Activated CD4-positive, alpha-beta memory T cell treated with anti-CD3 and anti-CD28 coated beads for 36 hours (primary cell): ENCODE measurements at regions of chr9 and their contacts with region 1.

Region 1: GRCh38 chr9:114894801-114895433 is 35.5 kb downstream of the TNFSF8 start:
- DNase-seq: peak; percentile 76
- H3K4me3 Mint-ChIP-seq: no peak overlapping the region
- H3K27ac Mint-ChIP-seq: peak overlapping the region; percentile 77
- H3K4me1 Mint-ChIP-seq: peaks cover 52% of the 10 kb centered on the region
- H3K27me3 Mint-ChIP-seq: no peaks in the 10 kb centered on the region

Region 2: DNA sequence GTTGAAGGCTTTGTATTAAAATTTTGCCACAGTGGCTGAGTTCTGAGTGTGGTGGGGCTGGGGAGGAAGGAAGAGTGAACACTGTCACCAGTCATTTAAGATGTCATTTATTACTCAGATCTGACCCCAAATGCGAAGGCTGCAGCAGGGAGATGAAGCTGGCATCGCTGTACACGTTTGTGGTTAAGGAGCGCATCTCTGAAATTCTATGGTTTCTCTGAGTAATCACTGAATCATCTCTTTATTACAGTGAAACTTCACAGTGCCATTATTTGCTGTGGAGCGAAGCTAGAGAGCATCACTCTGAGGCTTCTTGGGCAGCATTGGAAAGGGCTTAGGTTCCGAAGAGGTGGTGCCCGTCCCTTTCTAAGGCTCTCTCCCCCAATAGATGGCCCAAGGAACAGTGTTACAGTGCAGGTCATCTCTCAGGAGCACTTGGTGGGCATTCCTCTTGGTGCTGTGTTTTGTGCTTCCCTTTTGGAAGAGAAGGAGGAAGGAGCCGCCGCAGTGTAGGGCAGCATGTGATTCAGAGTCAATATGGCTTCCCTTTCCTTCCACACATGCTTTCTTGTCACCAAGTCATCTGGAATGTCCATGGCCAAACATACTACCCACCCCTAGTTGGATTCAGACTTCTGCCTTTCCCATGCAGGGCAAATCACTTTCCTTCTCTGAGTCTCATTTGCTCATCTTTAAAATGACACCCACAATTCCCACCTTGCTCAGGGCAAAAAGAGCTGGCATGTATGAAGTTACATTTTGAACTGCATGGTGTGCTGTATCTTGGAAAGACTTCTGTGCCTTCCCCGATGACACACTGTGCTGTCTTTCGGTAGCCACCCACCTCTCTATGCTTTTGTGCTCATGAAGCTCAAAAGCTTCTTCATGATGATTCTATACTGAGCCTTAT is 203.6 kb before region 1 on chr9:
- CTCF ChIA-PET with region 1: interaction called, 4 read pairs
- POLR2A ChIA-PET with region 1: interaction called, 11 read pairs
- intact Hi-C with region 1: loop called (anchors 2 kb)
- DNase-seq: peak; percentile 88
- H3K4me3 Mint-ChIP-seq: peak overlapping the region; percentile 55
- H3K27ac Mint-ChIP-seq: peak overlapping the region; percentile 99
- H3K4me1 Mint-ChIP-seq: peaks cover 87% of the 10 kb centered on the region
- H3K27me3 Mint-ChIP-seq: no peaks in the 10 kb centered on the region

Region 3: GRCh38 chr9:114738581-114739316 is 156.2 kb before region 1 on chr9:
- CTCF ChIA-PET with region 1: interaction called, 14 read pairs
- POLR2A ChIA-PET with region 1: no interaction called
- intact Hi-C with region 1: no loop called
- DNase-seq: peak; percentile 81
- H3K4me3 Mint-ChIP-seq: no peak overlapping the region
- H3K27ac Mint-ChIP-seq: peak overlapping the region; percentile 81
- H3K4me1 Mint-ChIP-seq: peaks cover 52% of the 10 kb centered on the region
- H3K27me3 Mint-ChIP-seq: no peaks in the 10 kb centered on the region

Region 4: DNA sequence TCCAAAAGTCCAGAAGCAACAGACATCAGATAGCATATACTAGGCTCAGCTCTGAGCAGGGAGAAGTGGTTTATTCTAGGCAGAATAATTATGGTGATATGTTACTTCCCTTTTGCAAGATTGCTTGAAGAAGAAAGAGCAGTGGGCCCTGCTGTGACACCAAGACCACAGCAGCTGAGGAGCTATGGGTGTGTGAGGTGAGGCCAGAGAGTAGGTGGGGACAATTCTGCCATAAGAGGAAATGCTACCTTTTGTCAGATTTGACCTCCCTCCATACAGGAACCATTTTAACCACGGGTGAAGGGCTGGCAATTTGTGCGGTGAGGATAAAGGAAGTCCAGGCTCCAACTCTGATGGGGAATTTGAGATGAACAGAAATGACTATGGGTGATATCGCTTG is 140.3 kb before region 1 on chr9:
- CTCF ChIA-PET with region 1: no interaction called
- POLR2A ChIA-PET with region 1: no interaction called
- intact Hi-C with region 1: no loop called
- DNase-seq: no peak
- H3K4me3 Mint-ChIP-seq: no peak overlapping the region
- H3K27ac Mint-ChIP-seq: no peak overlapping the region
- H3K4me1 Mint-ChIP-seq: peaks cover 6% of the 10 kb centered on the region
- H3K27me3 Mint-ChIP-seq: no peaks in the 10 kb centered on the region

Region 5: DNA sequence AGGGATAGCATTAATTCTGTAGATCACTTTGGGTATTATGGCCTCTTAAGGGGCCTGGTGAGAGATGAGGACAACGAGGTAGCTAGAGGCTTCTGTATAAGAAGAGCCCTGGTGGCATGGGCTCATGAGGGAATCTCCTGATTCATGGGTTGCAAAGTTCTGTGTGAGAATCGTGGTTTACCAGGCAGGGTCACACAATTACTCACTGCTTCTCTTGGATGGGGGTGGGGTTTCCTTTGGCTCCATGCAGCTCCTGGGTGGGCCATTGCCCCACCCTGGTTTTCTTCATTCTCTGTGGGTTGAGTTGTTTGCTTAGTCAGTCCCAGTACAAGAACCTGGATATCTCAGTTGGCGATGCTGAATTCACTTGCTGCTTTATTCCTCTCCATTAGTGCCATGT is 58.1 kb before region 1 on chr9:
- CTCF ChIA-PET with region 1: no interaction called
- POLR2A ChIA-PET with region 1: no interaction called
- intact Hi-C with region 1: no loop called
- DNase-seq: peak; percentile 36
- H3K4me3 Mint-ChIP-seq: no peak overlapping the region
- H3K27ac Mint-ChIP-seq: no peak overlapping the region
- H3K4me1 Mint-ChIP-seq: peaks cover 7% of the 10 kb centered on the region
- H3K27me3 Mint-ChIP-seq: no peaks in the 10 kb centered on the region

Region 6: GRCh38 chr9:114883709-114884108 is 11.2 kb before region 1 on chr9:
- CTCF ChIA-PET with region 1: interaction called, 4 read pairs
- POLR2A ChIA-PET with region 1: interaction called, 3 read pairs
- intact Hi-C with region 1: loop called (anchors 1 kb)
- DNase-seq: no peak
- H3K4me3 Mint-ChIP-seq: no peak overlapping the region
- H3K27ac Mint-ChIP-seq: no peak overlapping the region
- H3K4me1 Mint-ChIP-seq: peaks cover 15% of the 10 kb centered on the region
- H3K27me3 Mint-ChIP-seq: no peaks in the 10 kb centered on the region

Region 7: DNA sequence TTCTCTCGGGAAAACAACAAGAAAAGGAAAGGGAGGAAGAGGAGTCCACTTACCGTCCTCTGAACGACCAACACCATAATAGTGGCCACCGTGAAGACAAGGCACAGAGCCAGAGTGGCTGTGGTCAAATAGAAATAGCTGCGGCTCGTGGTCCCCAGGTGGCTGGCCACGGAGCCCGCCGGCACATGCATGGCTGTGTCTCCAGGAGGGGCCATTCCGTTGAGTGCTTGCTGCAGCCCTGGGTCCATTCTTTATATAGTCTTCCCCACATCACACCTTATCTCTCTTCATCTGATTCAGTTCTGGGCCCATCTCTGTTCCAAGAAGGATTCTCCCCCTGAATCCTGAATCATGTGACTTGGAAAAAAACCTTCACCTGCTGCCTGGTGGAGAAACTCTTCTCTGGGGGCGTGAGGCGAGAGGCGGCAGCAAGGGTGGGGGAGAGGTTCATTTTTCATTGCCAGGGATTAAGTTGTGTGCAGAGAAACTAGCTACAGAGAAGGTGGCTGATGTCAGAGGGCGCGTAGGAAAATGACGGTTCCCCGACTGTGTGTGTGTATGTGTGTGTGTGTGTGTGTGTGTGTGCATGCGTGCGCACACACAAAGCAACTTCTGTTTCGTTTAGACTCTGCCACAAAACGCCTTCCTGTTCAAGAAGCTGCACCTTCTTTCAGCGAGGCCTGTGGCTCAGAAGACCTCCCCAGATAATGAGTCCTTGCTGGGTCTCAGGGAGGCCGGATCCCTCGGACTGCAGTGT is 35.3 kb after region 1 on chr9 and contains the start of gene TNFSF8:
- CTCF ChIA-PET with region 1: interaction called, 4 read pairs
- POLR2A ChIA-PET with region 1: interaction called, 10 read pairs
- intact Hi-C with region 1: loop called (anchors 1 kb)
- DNase-seq: peak; percentile 90
- H3K4me3 Mint-ChIP-seq: peak within 1 kb of the TSS; percentile 94
- H3K27ac Mint-ChIP-seq: peak within 1 kb of the TSS; percentile 97
- H3K4me1 Mint-ChIP-seq: peaks cover 44% of the 10 kb centered on the region
- H3K27me3 Mint-ChIP-seq: no peaks in the 10 kb centered on the region
- total RNA-seq, gene TNFSF8: 37.9 to 38.7 TPM

Region 8: GRCh38 chr9:114968671-114969070 is 73.8 kb after region 1 on chr9:
- CTCF ChIA-PET with region 1: no interaction called
- POLR2A ChIA-PET with region 1: no interaction called
- intact Hi-C with region 1: no loop called
- DNase-seq: no peak
- H3K4me3 Mint-ChIP-seq: no peak overlapping the region
- H3K27ac Mint-ChIP-seq: no peak overlapping the region
- H3K4me1 Mint-ChIP-seq: peaks cover 24% of the 10 kb centered on the region
- H3K27me3 Mint-ChIP-seq: no peaks in the 10 kb centered on the region